Naive thymus-derived CD4-positive, alpha-beta T cell (primary cell): ENCODE measurements at regions of chr7 and their contacts with region 1.

Region 1: GRCh38 chr7:134669845-134670373 is 23.3 kb downstream of the BPGM start:
- DNase-seq: peak; percentile 41 to 95 (median 92)
- ATAC-seq: peak; percentile 98
- H3K4me3 ChIP-seq: peak overlapping the region; percentile 25
- H3K4me3 Mint-ChIP-seq: peak overlapping the region; percentile 58 to 88 (median 82)
- H3K27ac ChIP-seq: peak overlapping the region; percentile 84
- H3K27ac Mint-ChIP-seq: peak overlapping the region; percentile 79 to 100 (median 96)
- H3K4me1 ChIP-seq: peaks cover 13 to 38% of the 10 kb centered on the region in 2 donors
- H3K4me1 Mint-ChIP-seq: peaks cover 14 to 69% (median 63%) of the 10 kb centered on the region in 7 donors
- H3K27me3 ChIP-seq: no peaks in the 10 kb centered on the region
- H3K27me3 Mint-ChIP-seq: no peaks in the 10 kb centered on the region

Region 2: GRCh38 chr7:134654104-134654775 is 15.7 kb before region 1 on chr7:
- CTCF ChIA-PET with region 1: interaction called, 6 read pairs
- POLR2A ChIA-PET with region 1: interaction called, 154 read pairs
- intact Hi-C with region 1: loop called in 1 of 2 experiments (anchors 2 kb)
- DNase-seq: no peak
- ATAC-seq: no peak
- H3K4me3 ChIP-seq: no peak overlapping the region
- H3K4me3 Mint-ChIP-seq: peak overlapping the region in 1 of 10 donors; percentile 31
- H3K27ac ChIP-seq: no peak overlapping the region
- H3K27ac Mint-ChIP-seq: peak overlapping the region in 4 of 9 donors; percentile 39 to 62 (median 50)
- H3K4me1 ChIP-seq: peaks cover 0 to 7% of the 10 kb centered on the region in 2 donors
- H3K4me1 Mint-ChIP-seq: peaks cover 32 to 76% (median 57%) of the 10 kb centered on the region in 7 donors
- H3K27me3 ChIP-seq: no peaks in the 10 kb centered on the region
- H3K27me3 Mint-ChIP-seq: no peaks in the 10 kb centered on the region

Region 3: DNA sequence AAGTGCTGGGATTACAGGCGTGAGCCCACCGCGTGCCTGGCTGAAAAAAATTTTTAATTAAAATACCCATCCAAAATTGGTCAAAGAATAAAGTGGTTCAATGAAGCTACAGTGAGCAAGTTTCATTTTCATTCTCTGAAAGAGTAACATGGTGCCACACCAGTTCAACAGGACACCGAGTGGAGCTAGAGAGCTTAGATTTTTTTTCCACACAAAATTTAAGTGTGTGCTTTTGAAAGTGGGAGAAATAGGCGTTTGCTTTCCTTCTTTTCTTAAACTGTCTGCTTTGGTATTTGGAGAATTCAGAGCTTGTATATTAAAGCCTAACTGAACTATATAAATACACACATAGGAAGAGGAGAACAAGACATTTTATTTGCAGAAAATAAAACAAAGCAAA is 20.1 kb after region 1 on chr7:
- CTCF ChIA-PET with region 1: interaction called, 4 read pairs
- POLR2A ChIA-PET with region 1: interaction called, 12 read pairs
- intact Hi-C with region 1: no loop called
- DNase-seq: peak in 1 of 9 donors; percentile 12
- ATAC-seq: no peak
- H3K4me3 ChIP-seq: no peak overlapping the region
- H3K4me3 Mint-ChIP-seq: no peak overlapping the region
- H3K27ac ChIP-seq: no peak overlapping the region
- H3K27ac Mint-ChIP-seq: peak overlapping the region in 6 of 9 donors; percentile 10 to 43 (median 34)
- H3K4me1 ChIP-seq: peaks cover 0 to 5% of the 10 kb centered on the region in 2 donors
- H3K4me1 Mint-ChIP-seq: peaks cover 6 to 26% (median 14%) of the 10 kb centered on the region in 7 donors
- H3K27me3 ChIP-seq: no peaks in the 10 kb centered on the region
- H3K27me3 Mint-ChIP-seq: peaks cover 0 to 7% (median 0%) of the 10 kb centered on the region in 5 donors

Region 4: DNA sequence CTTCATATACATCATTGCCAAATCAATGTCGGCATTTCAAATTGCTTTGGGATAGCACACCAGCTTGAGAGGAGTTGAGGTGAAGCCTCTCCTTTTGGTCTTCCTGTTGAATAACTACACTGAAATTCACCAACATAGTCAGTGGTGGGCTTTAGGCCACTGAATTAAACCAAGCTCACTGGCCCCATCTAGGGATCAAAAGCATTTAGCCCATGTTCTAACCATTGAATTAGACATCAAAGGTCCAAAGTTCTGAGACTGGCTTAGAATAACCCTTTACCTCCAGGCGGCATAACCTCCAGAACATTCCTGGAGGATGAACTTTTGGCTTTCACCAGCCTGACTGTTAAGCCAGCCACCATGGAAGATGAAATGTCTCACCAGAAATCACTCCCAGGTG is 31.4 kb after region 1 on chr7:
- CTCF ChIA-PET with region 1: interaction called, 4 read pairs
- POLR2A ChIA-PET with region 1: interaction called, 3 read pairs
- intact Hi-C with region 1: loop called in 1 of 2 experiments (anchors 2 kb)
- DNase-seq: peak in 6 of 9 donors; percentile 10 to 39 (median 23)
- ATAC-seq: peak; percentile 60
- H3K4me3 ChIP-seq: no peak overlapping the region
- H3K4me3 Mint-ChIP-seq: no peak overlapping the region
- H3K27ac ChIP-seq: no peak overlapping the region
- H3K27ac Mint-ChIP-seq: peak overlapping the region in 1 of 9 donors; percentile 25
- H3K4me1 ChIP-seq: no peaks in the 10 kb centered on the region
- H3K4me1 Mint-ChIP-seq: no peaks in the 10 kb centered on the region
- H3K27me3 ChIP-seq: no peaks in the 10 kb centered on the region
- H3K27me3 Mint-ChIP-seq: peaks cover 0 to 2% (median 0%) of the 10 kb centered on the region in 5 donors

Region 5: GRCh38 chr7:134710859-134711624 is 41.1 kb after region 1 on chr7:
- CTCF ChIA-PET with region 1: no interaction called
- POLR2A ChIA-PET with region 1: interaction called, 6 read pairs
- intact Hi-C with region 1: loop called (anchors 1 to 2 kb)
- DNase-seq: peak; percentile 15 to 92 (median 88)
- ATAC-seq: peak; percentile 96
- H3K4me3 ChIP-seq: peak overlapping the region; percentile 15
- H3K4me3 Mint-ChIP-seq: peak overlapping the region; percentile 32 to 77 (median 66)
- H3K27ac ChIP-seq: peak overlapping the region; percentile 77
- H3K27ac Mint-ChIP-seq: peak overlapping the region; percentile 86 to 99 (median 94)
- H3K4me1 ChIP-seq: peaks cover 10 to 15% of the 10 kb centered on the region in 2 donors
- H3K4me1 Mint-ChIP-seq: peaks cover 11 to 32% (median 22%) of the 10 kb centered on the region in 7 donors
- H3K27me3 ChIP-seq: no peaks in the 10 kb centered on the region
- H3K27me3 Mint-ChIP-seq: no peaks in the 10 kb centered on the region